CD4-positive, alpha-beta memory T cell (primary cell): ENCODE measurements at regions of chr10 and their contacts with region 1.

Region 1: GRCh38 chr10:133261726-133262325 is 14.8 kb downstream of the ADAM8 start:
- DNase-seq: peak; percentile 75 to 83 (median 78)
- H3K4me3 ChIP-seq: peak overlapping the region in 1 of 2 donors; percentile 46
- H3K4me3 Mint-ChIP-seq: peak overlapping the region; percentile 70 to 79 (median 76)
- H3K27ac ChIP-seq: peak overlapping the region; percentile 83
- H3K27ac Mint-ChIP-seq: peak overlapping the region; percentile 90 to 98 (median 92)
- H3K4me1 ChIP-seq: peaks cover 85% of the 10 kb centered on the region
- H3K4me1 Mint-ChIP-seq: peaks cover 29 to 86% (median 66%) of the 10 kb centered on the region in 4 donors
- H3K27me3 ChIP-seq: no peaks in the 10 kb centered on the region
- H3K27me3 Mint-ChIP-seq: peaks cover 0 to 4% of the 10 kb centered on the region in 2 donors

Region 2: DNA sequence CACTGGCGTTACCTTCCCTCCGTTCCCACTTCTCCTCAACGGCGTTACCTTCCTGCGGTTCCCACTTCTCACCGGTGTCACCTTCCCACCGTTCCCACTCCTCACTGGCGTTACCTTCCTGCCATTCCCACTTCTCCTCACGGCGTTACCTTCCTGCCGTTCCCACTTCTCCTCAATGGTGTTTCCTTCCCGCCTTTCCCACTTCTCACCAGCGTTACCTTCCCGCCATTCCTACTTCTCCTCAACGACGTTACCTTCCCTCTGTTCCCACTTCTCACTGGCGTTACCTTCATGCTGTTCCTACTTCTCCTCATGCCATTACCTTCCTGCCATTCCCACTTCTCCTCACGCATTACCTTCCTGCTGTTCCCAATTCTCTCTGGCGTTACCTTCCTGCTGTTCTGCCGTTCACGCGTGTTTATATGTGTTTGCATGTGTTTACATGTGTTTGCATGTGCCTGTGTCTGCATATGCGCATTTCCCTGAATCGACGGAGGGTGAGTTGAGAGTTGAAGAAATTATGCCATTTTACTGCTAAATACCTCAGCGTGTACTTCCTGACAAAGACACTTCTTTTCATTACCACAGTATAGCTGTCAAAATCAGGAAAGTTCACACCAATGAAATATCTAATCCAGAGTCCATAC is 296.3 kb before region 1 on chr10:
- CTCF ChIA-PET with region 1: no interaction called
- POLR2A ChIA-PET with region 1: no interaction called
- intact Hi-C with region 1: no loop called
- DNase-seq: no peak
- H3K4me3 ChIP-seq: no peak overlapping the region
- H3K4me3 Mint-ChIP-seq: peak overlapping the region in 4 of 8 donors; percentile 2 to 27 (median 11)
- H3K27ac ChIP-seq: no peak overlapping the region
- H3K27ac Mint-ChIP-seq: peak overlapping the region in 1 of 7 donors; percentile 5
- H3K4me1 ChIP-seq: peaks cover 10% of the 10 kb centered on the region
- H3K4me1 Mint-ChIP-seq: peaks cover 10 to 22% (median 18%) of the 10 kb centered on the region in 4 donors
- H3K27me3 ChIP-seq: peaks cover 2% of the 10 kb centered on the region
- H3K27me3 Mint-ChIP-seq: peaks cover 0 to 4% of the 10 kb centered on the region in 2 donors

Region 3: GRCh38 chr10:133061296-133062038 is 200.4 kb before region 1 on chr10:
- CTCF ChIA-PET with region 1: no interaction called
- POLR2A ChIA-PET with region 1: no interaction called
- intact Hi-C with region 1: no loop called
- DNase-seq: no peak
- H3K4me3 ChIP-seq: no peak overlapping the region
- H3K4me3 Mint-ChIP-seq: no peak overlapping the region
- H3K27ac ChIP-seq: no peak overlapping the region
- H3K27ac Mint-ChIP-seq: no peak overlapping the region
- H3K4me1 ChIP-seq: peaks cover 9% of the 10 kb centered on the region
- H3K4me1 Mint-ChIP-seq: peaks cover 8 to 16% (median 9%) of the 10 kb centered on the region in 4 donors
- H3K27me3 ChIP-seq: no peaks in the 10 kb centered on the region
- H3K27me3 Mint-ChIP-seq: peaks cover 0 to 4% of the 10 kb centered on the region in 2 donors

Region 4: DNA sequence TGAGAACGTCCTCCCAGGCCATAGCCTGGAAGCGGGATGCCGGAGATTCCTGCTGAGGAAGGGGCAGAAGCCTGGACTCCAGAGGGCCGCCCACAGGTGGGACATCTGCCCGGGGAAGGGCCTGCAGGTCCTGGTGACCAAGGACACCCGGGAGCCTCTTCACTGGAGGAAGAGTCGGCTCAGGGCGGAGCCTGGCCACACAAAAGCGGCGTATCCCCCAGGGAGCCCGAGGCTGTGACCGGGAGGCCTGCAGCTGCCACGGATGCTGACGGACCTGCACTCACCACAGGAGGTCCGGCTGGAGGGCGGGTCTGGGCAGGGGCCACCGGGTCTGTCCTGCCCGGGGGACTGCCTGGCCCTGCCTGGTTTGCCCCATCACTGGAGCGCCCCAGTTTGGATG is 189.6 kb before region 1 on chr10:
- CTCF ChIA-PET with region 1: no interaction called
- POLR2A ChIA-PET with region 1: no interaction called
- intact Hi-C with region 1: no loop called
- DNase-seq: no peak
- H3K4me3 ChIP-seq: no peak overlapping the region
- H3K4me3 Mint-ChIP-seq: no peak overlapping the region
- H3K27ac ChIP-seq: no peak overlapping the region
- H3K27ac Mint-ChIP-seq: no peak overlapping the region
- H3K4me1 ChIP-seq: no peaks in the 10 kb centered on the region
- H3K4me1 Mint-ChIP-seq: no peaks in the 10 kb centered on the region
- H3K27me3 ChIP-seq: no peaks in the 10 kb centered on the region
- H3K27me3 Mint-ChIP-seq: peaks cover 2 to 4% of the 10 kb centered on the region in 2 donors

Region 5: GRCh38 chr10:133143200-133143533 is 118.7 kb before region 1 on chr10:
- CTCF ChIA-PET with region 1: interaction called, 13 read pairs
- POLR2A ChIA-PET with region 1: no interaction called
- intact Hi-C with region 1: no loop called
- DNase-seq: no peak
- H3K4me3 ChIP-seq: no peak overlapping the region
- H3K4me3 Mint-ChIP-seq: no peak overlapping the region
- H3K27ac ChIP-seq: no peak overlapping the region
- H3K27ac Mint-ChIP-seq: no peak overlapping the region
- H3K4me1 ChIP-seq: no peaks in the 10 kb centered on the region
- H3K4me1 Mint-ChIP-seq: peaks cover 4 to 11% (median 7%) of the 10 kb centered on the region in 4 donors
- H3K27me3 ChIP-seq: no peaks in the 10 kb centered on the region
- H3K27me3 Mint-ChIP-seq: peaks cover 27 to 35% of the 10 kb centered on the region in 2 donors

Region 6: DNA sequence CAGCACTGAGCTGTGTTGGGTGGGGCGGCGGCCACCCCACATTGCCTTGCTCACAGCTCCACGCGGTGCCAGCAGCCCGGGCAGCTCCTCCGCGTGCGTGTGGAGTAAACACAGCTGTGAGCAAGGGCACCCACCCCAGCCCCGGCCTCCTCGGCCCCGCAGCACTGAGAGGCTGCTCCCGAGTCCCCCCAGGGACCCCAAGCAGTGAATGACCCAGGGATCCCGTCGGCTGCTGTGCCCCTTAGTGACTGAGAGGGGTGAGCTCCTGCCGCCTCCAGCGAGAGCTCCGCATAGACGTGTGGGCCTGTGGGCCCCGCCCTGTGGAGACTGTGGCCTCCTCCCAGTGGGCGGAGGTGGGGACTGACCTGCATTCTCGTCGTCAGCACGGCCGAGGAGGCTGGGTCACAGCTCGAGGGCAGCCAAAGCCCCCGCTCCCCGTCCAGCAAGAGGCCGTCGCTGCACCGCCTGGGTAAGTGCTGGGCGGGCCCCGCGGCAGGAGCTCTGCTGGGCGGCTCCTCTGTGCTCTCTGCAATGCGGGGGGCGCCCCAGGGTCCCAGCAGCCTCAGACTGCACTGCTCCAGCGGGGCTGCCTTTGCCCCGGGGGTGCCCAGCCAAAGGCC is 61.7 kb before region 1 on chr10:
- CTCF ChIA-PET with region 1: no interaction called
- POLR2A ChIA-PET with region 1: no interaction called
- intact Hi-C with region 1: no loop called
- DNase-seq: no peak
- H3K4me3 ChIP-seq: no peak overlapping the region
- H3K4me3 Mint-ChIP-seq: no peak overlapping the region
- H3K27ac ChIP-seq: no peak overlapping the region
- H3K27ac Mint-ChIP-seq: no peak overlapping the region
- H3K4me1 ChIP-seq: no peaks in the 10 kb centered on the region
- H3K4me1 Mint-ChIP-seq: no peaks in the 10 kb centered on the region
- H3K27me3 ChIP-seq: no peaks in the 10 kb centered on the region
- H3K27me3 Mint-ChIP-seq: peaks cover 0 to 2% of the 10 kb centered on the region in 2 donors

Region 7: GRCh38 chr10:133278577-133279265 is 16.9 kb after region 1 on chr10:
- CTCF ChIA-PET with region 1: interaction called, 11 read pairs
- POLR2A ChIA-PET with region 1: interaction called, 236 read pairs
- intact Hi-C with region 1: loop called (anchors 1 kb)
- DNase-seq: peak; percentile 73 to 89 (median 77)
- H3K4me3 ChIP-seq: peak overlapping the region in 1 of 2 donors; percentile 3
- H3K4me3 Mint-ChIP-seq: peak overlapping the region; percentile 80 to 96 (median 89)
- H3K27ac ChIP-seq: peak overlapping the region; percentile 99
- H3K27ac Mint-ChIP-seq: peak overlapping the region; percentile 95 to 99 (median 98)
- H3K4me1 ChIP-seq: peaks cover 50% of the 10 kb centered on the region
- H3K4me1 Mint-ChIP-seq: peaks cover 15 to 48% (median 35%) of the 10 kb centered on the region in 4 donors
- H3K27me3 ChIP-seq: no peaks in the 10 kb centered on the region
- H3K27me3 Mint-ChIP-seq: no peaks in the 10 kb centered on the region